PC-9 (cell line): ENCODE measurements at regions of chr21 and their contacts with region 1.

Region 1: DNA sequence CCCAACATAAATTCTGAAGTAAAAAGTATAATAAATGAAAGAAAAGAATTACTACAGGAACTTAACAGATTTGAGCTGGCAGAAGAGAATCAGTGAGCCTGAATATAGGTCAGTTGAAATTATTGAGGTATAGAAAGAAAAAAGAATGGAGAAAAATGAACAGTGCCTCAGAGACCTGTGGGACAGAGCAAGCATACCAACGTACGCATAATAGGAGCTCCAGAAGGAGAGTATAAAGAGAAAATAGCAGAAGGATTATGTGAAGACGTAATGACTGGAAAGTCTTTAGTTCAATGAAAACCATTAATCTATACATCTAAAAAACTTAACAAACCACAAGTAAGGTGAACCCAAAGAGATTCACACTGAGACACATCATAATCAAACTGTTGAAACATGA is 261.8 kb downstream of the DYRK1A start:
- DNase-seq: no peak
- H3K4me3 ChIP-seq: no peak overlapping the region
- H3K27ac ChIP-seq: no peak overlapping the region
- H3K4me1 ChIP-seq: peaks cover 9% of the 10 kb centered on the region; the same call in 1 of the 2 replicates
- H3K27me3 ChIP-seq: no peaks in the 10 kb centered on the region
- CTCF ChIP-seq: no peak

Region 2: DNA sequence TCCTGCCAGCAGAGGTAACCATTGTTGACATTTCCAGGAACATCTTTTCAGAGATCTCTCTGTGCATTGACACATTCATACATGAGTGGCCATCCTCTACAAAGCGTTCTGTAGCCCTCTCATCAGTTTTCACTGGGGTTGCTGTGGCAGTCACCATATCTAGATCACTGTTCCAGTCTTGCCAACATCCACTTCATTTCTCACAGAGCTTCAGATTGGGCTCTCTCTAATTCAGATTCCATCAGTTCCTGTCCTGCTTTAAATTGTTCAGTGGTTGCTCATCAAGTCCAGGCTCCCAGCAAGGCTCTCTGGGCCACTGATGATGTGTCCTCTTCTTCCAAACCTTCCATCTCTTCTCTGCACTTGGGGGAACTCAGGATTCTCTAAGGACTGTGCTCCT is 114.2 kb after region 1 on chr21:
- CTCF ChIA-PET with region 1: no interaction called
- POLR2A ChIA-PET with region 1: interaction called, 18 read pairs
- intact Hi-C with region 1: no loop called
- DNase-seq: no peak
- H3K4me3 ChIP-seq: no peak overlapping the region
- H3K27ac ChIP-seq: no peak overlapping the region
- H3K4me1 ChIP-seq: no peaks in the 10 kb centered on the region
- H3K27me3 ChIP-seq: peaks cover 6% of the 10 kb centered on the region
- CTCF ChIP-seq: no peak

Region 3: DNA sequence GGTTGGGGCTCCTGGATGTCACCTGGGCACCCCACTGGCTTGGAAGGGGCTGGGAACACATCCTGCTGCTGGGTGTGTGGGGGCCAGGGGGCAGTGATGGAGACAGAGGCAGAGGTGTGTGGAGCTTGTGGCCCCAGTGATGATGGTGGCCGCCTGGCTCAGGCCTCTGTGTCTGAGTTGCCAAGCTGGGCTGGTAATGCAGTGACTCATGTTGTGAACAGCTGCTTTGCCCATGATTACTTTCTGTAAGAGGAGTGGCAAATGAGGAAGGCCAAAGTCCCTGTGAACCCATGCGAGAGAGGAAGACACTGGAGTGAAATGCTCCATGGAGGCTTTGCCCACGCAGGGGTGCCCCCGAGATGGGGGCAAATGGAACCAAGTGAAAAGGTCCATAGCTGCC is 201.1 kb after region 1 on chr21:
- CTCF ChIA-PET with region 1: no interaction called
- POLR2A ChIA-PET with region 1: no interaction called
- intact Hi-C with region 1: no loop called
- DNase-seq: no peak
- H3K4me3 ChIP-seq: no peak overlapping the region
- H3K27ac ChIP-seq: no peak overlapping the region
- H3K4me1 ChIP-seq: no peaks in the 10 kb centered on the region
- H3K27me3 ChIP-seq: peaks cover 18% of the 10 kb centered on the region
- CTCF ChIP-seq: no peak